PC-9 (cell line): ENCODE measurements at regions of chr12 and their contacts with region 1.

Region 1: DNA sequence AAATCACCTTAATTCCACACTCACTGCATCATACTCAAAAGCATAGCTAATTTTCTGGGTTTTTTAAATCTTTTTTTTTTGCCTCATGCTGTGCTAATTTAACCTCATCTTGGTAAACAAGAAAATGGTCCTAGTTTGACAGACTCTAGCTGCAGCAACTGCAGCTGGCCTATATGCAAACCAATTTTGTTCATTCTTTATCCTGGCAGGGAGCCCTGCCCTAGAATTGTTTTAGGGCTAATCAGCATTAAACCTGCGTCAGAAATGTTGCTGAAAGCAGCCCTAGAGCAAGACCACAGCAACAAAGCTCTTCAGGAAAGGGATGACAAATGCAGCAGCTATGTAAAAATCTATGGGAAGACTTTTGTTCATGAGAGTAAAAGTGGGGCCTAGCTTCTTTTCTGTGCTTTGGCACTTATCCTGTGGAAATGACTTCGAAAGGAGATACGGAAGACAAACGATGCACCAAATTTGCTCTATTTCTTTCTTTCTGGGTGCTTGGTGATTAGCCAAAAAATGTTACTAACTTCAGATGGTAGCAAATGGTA is 72.2 kb downstream of the DENND5B start:
- DNase-seq: peak; percentile 82 to 93
- H3K4me3 ChIP-seq: no peak overlapping the region
- H3K27ac ChIP-seq: peak overlapping the region; percentile 77
- H3K4me1 ChIP-seq: peaks cover 31% of the 10 kb centered on the region
- H3K27me3 ChIP-seq: no peaks in the 10 kb centered on the region
- CTCF ChIP-seq: no peak

Region 2: GRCh38 chr12:31491819-31492598 is 26.7 kb before region 1 on chr12:
- CTCF ChIA-PET with region 1: no interaction called
- POLR2A ChIA-PET with region 1: interaction called, 7 read pairs
- intact Hi-C with region 1: loop called (anchors 1 kb)
- DNase-seq: peak; percentile 68 to 90
- H3K4me3 ChIP-seq: no peak overlapping the region
- H3K27ac ChIP-seq: peak overlapping the region; percentile 60
- H3K4me1 ChIP-seq: peaks cover 33% of the 10 kb centered on the region
- H3K27me3 ChIP-seq: no peaks in the 10 kb centered on the region
- CTCF ChIP-seq: no peak

Region 3: GRCh38 chr12:31506515-31507306 is 12.0 kb before region 1 on chr12:
- CTCF ChIA-PET with region 1: no interaction called
- POLR2A ChIA-PET with region 1: interaction called, 11 read pairs
- intact Hi-C with region 1: no loop called
- DNase-seq: no peak
- H3K4me3 ChIP-seq: no peak overlapping the region
- H3K27ac ChIP-seq: no peak overlapping the region
- H3K4me1 ChIP-seq: peaks cover 22% of the 10 kb centered on the region
- H3K27me3 ChIP-seq: no peaks in the 10 kb centered on the region
- CTCF ChIP-seq: no peak

Region 4: DNA sequence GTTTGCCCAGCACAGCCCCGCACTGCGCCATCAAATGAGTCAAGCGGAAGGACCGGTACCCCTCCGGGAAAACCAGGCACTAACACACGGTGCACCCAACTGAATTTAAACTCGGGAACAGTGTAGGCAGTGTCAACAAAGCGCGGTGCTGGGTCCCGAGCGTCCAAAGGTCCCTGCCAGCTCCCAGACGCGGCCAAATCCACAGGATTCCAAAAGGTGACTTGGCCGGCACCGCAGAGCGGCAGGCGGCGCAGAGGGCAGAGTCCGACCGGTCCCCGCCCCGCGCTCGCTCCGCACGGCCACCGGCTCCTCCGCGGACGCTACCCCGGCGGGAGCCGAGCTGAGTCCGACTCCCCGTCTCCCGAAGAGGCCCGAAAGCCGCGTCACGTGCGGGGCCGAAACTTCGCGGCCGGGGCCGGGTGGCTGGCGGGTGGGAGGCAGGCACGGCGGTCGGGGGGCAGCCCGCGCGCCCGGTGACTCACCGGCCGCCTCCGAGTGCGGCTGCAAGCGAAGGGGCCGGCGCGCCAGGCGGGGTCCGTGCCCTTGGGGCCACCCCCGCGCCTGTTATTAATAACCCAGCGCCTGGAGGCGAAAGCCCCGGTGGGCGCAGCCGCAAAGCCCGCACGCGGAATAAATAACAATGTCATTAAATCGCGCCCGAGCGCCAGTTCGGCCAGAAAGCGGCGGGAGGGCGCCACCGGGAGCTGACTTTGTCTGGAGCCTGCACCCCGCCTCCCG is 71.3 kb after region 1 on chr12:
- CTCF ChIA-PET with region 1: no interaction called
- POLR2A ChIA-PET with region 1: interaction called, 3 read pairs
- intact Hi-C with region 1: loop called (anchors 2 kb)
- DNase-seq: peak; percentile 40 to 64
- H3K4me3 ChIP-seq: peak overlapping the region; percentile 78
- H3K27ac ChIP-seq: no peak overlapping the region
- H3K4me1 ChIP-seq: peaks cover 12% of the 10 kb centered on the region
- H3K27me3 ChIP-seq: no peaks in the 10 kb centered on the region
- CTCF ChIP-seq: no peak

Region 5: DNA sequence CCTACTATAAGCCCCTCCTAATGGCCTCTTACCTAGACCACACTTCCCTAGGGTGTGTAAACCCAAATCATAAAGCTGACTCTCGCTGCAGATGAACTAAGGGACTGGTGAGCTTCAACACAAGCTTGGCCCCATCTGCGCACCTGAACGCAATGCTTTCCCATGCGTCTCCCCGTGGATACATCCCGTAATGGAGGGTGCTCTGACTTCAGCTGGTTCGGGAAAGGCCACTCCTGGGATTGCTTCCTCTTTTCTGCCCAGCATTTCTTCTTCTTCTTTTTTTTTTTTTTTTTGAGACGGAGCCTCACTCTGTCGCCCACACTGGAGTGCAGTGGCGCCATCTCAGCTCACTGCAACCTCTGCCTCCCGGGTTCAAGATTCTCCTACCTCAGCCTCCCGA is 113.0 kb after region 1 on chr12:
- CTCF ChIA-PET with region 1: no interaction called
- POLR2A ChIA-PET with region 1: no interaction called
- intact Hi-C with region 1: loop called (anchors 2 kb)
- DNase-seq: no peak
- H3K4me3 ChIP-seq: no peak overlapping the region
- H3K27ac ChIP-seq: no peak overlapping the region
- H3K4me1 ChIP-seq: no peaks in the 10 kb centered on the region
- H3K27me3 ChIP-seq: no peaks in the 10 kb centered on the region
- CTCF ChIP-seq: no peak

Region 6: GRCh38 chr12:32494656-32495055 is 975.9 kb after region 1 on chr12:
- CTCF ChIA-PET with region 1: no interaction called
- POLR2A ChIA-PET with region 1: no interaction called
- intact Hi-C with region 1: no loop called
- DNase-seq: no peak
- H3K4me3 ChIP-seq: no peak overlapping the region
- H3K27ac ChIP-seq: no peak overlapping the region
- H3K4me1 ChIP-seq: no peaks in the 10 kb centered on the region
- H3K27me3 ChIP-seq: no peaks in the 10 kb centered on the region
- CTCF ChIP-seq: no peak

Region 7: DNA sequence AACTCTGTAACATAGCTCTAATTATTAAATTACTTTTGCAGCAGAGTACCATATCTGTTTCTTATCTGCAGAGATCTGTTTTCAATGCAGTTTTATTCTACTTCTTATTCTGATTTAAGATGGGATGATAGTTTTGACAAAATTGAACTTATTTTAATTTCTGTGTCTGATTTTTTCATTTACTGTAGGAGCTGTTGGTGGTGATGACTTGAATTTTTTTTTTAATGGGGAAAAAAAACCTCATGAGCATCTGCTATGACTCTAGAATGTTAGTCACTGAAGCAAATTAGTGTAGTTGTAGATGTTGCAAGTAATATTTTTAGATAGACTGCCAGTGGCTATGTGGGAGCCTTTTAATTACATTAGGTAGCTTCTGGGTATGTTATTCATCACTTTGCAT is 1183.7 kb after region 1 on chr12:
- CTCF ChIA-PET with region 1: no interaction called
- POLR2A ChIA-PET with region 1: no interaction called
- intact Hi-C with region 1: no loop called
- DNase-seq: no peak
- H3K4me3 ChIP-seq: no peak overlapping the region
- H3K27ac ChIP-seq: no peak overlapping the region
- H3K4me1 ChIP-seq: no peaks in the 10 kb centered on the region
- H3K27me3 ChIP-seq: no peaks in the 10 kb centered on the region
- CTCF ChIP-seq: no peak